ENCODE measurements at regions of chr14 and their contacts with region 1.

Region 1: DNA sequence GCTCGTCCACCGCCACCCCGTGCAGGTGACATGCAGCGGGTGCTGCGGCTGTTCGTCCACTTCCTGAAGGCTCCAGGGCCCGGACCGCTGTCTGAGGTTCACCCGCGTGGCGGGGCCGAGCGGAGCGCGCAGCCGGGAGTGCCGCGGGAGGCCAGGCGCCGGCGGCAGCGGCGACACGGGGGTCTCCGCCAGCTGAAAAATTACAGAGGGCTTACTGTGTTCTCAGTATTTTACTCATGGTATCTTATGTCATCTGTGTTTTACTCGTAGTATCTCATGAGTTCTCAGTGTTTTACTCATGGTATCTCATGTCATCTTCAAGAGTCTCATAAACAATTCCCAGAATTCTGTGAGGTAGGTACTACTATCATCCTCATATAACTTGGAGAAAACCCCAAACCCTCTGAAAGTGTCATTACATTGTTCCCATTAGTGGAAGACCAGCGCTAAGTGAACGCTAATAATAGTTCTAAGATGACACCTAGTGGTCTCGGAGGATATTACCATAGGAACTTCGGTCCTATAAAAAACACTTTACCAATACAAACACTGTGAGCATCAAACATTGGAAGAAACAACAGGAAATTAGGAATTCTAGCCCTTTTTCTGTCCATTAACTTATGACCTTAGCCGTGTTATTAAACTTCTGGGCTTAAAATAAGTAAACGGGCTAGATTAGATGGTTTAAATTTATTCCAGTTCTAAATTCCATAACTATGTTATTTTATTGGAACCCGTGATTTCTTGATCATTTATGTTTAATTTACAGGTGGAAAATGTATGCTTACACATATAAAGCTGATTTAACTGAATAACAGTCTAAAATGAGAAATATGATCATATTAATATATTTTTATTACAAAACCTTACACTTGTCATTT is 32.4 kb downstream of the AK7 start:
- DNase-seq: no peak
- H3K4me3 ChIP-seq: no peak overlapping the region
- CTCF ChIP-seq: peak in 1 of 3 donors; percentile 31
- POLR2A ChIP-seq: no peak

Region 2: DNA sequence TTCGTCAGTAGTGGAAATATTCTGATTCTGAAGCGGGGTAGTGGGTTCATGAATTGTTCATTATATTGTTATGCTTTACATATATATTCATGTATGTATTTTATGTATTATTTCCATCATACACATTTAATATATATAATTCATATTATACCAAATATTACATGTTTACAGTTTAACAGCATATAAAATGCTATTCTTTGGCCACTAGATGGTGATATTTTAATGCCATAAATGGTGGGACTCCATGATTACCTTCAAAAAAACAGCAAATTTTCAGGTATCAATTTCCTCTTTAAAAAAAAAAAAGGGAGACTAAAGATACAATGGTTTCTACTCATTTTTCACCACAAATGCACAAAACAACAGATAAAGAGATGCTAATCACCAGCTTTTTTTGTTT is 127.3 kb before region 1 on chr14:
- intact Hi-C with region 1: loop called (anchors 10 kb)
- DNase-seq: no peak
- H3K4me3 ChIP-seq: no peak overlapping the region
- CTCF ChIP-seq: no peak
- POLR2A ChIP-seq: no peak